ENCODE measurements at regions of chr3 and their contacts with region 1.

Region 1: DNA sequence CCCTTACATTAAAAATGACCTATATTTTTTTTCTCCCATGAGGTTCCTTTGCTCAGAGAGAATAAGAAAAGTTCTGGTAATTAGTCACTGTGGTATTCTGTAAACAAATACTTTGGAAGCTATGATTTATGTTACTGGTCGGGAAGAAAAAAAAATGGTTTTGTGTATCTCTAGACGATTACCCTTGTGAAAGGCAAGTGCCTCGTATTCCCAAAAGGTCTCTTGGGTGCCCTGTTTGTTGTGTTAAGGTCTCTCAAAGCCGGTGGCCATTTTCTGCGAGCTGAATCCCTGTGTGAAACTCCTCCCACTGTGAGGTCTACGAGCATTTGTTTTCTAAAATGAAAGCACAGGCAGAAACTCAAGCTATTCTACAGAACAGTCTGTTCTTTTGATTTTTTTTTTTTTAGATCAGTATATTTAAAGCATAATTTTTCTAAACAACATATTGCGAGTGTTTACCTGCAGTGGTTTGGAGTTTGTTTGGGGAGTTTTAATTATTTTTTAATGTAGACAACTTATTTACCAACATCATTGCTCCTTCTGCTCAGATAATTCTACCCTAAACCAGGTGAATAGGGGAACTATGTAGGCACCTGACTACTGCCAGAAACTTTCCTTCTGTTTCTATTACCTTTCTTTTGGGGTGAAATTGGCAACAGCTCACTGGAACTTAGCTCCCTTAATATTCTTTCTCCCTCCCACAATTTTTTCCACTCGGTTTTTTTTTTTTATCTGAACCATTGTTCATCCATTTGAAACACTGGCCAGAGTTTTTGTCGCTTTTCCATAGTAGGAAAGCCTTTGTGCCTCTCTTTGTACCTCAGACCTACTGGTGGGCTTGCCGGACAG is 44.0 kb downstream of the ZBTB38 start:
- DNase-seq: peak; percentile 49 to 87
- ATAC-seq: peak; percentile 81 to 90 (median 88)
- H3K4me3 ChIP-seq: peak overlapping the region; percentile 23
- H3K4me3 Mint-ChIP-seq: peak overlapping the region; percentile 89
- H3K27ac ChIP-seq: peak overlapping the region; percentile 72
- H3K27ac Mint-ChIP-seq: peak overlapping the region; percentile 96 to 98
- H3K4me1 ChIP-seq: peaks cover 57% of the 10 kb centered on the region
- H3K4me1 Mint-ChIP-seq: peaks cover 56 to 65% of the 10 kb centered on the region in 2 donors
- H3K27me3 ChIP-seq: no peaks in the 10 kb centered on the region
- H3K27me3 Mint-ChIP-seq: no peaks in the 10 kb centered on the region
- CTCF ChIP-seq: no peak

Region 2: GRCh38 chr3:141368062-141368924 is 44.0 kb before region 1 on chr3 and contains the start of gene ZBTB38:
- intact Hi-C with region 1: no loop called
- DNase-seq: peak in 1 of 2 donors; percentile 29
- ATAC-seq: peak in 2 of 3 donors; percentile 35 to 54
- H3K4me3 ChIP-seq: no peak within 1 kb of the TSS
- H3K4me3 Mint-ChIP-seq: peak within 1 kb of the TSS; percentile 47
- H3K27ac ChIP-seq: no peak within 1 kb of the TSS
- H3K27ac Mint-ChIP-seq: peak within 1 kb of the TSS; percentile 50 to 87
- H3K4me1 ChIP-seq: peaks cover 7% of the 10 kb centered on the region
- H3K4me1 Mint-ChIP-seq: peaks cover 9 to 24% of the 10 kb centered on the region in 2 donors
- H3K27me3 ChIP-seq: no peaks in the 10 kb centered on the region
- H3K27me3 Mint-ChIP-seq: no peaks in the 10 kb centered on the region
- CTCF ChIP-seq: no peak
- total RNA-seq, gene ZBTB38: 40.3 to 68.3 (median 56.7) TPM

Region 3: DNA sequence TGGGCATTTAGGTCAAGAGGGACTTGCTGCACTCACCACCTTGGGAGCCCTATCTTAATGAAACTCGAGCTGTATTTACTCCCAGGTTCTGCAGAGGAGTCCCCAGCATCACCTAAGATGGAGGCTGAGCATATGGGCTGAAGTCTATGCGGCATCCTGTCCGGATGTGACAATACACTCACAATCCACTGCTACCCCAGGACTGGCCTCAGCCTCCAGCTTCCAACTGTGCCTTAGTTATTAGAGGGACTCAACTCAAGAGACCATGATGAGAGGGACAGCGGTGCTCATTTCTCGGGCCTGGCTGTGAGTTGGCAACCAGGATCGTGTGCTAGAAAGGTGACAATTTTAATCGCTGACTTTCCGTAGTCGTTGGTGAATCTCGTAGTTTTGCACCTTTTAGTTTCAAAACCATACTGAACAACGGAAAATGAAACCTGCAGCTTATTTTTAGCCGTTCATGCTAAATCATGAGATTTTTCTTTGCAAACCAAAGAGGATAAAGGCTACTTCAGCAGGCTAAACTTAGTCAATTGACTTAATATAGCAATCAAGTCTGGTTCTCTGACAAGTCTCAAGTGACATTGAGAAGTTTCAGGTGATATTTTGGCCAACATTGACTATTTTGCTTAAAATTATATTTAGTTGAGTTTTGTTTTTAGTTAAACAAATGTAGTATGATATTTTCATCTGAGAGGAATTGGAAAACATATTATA is 32.9 kb before region 1 on chr3:
- intact Hi-C with region 1: loop called (anchors 5 kb)
- DNase-seq: peak in 1 of 2 donors; percentile 65
- ATAC-seq: peak; percentile 58 to 75 (median 59)
- H3K4me3 ChIP-seq: no peak overlapping the region
- H3K4me3 Mint-ChIP-seq: peak overlapping the region; percentile 6
- H3K27ac ChIP-seq: peak overlapping the region; percentile 69
- H3K27ac Mint-ChIP-seq: peak overlapping the region; percentile 63 to 78
- H3K4me1 ChIP-seq: peaks cover 8% of the 10 kb centered on the region
- H3K4me1 Mint-ChIP-seq: peaks cover 0 to 22% of the 10 kb centered on the region in 2 donors
- H3K27me3 ChIP-seq: no peaks in the 10 kb centered on the region
- H3K27me3 Mint-ChIP-seq: peaks cover 0 to under 1% of the 10 kb centered on the region in 2 donors
- CTCF ChIP-seq: no peak

Region 4: DNA sequence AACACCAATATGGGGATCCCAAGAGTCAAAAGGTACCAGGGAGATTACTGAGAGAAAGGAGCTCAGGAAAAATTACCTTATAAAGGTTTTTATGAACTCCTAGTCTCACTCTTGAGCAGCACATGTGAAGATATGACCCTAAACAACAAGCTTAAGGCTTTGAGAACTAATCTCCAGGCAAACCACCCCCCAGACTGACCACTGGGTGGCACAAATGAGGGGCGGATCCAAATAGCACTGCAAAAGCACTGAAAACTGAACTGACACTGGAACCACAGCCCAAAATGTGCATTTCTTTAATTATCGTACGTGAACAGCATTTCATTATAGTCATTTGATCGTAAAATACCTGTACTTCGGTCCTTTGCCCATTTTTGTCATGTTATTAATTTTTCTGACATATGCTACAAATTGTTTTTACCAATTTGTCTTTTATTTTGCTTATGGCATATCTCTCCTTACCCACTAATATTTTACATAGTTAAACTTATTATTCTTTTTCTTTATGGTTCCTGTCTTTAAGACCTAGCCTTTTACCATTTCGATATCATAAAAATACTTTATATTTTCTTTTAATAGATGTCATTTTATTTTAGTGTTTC is 768.6 kb after region 1 on chr3:
- intact Hi-C with region 1: no loop called
- DNase-seq: peak; percentile 51 to 53
- ATAC-seq: peak; percentile 83 to 97 (median 97)
- H3K4me3 ChIP-seq: no peak overlapping the region
- H3K4me3 Mint-ChIP-seq: peak overlapping the region; percentile 1
- H3K27ac ChIP-seq: no peak overlapping the region
- H3K27ac Mint-ChIP-seq: peak overlapping the region; percentile 79 to 86
- H3K4me1 ChIP-seq: no peaks in the 10 kb centered on the region
- H3K4me1 Mint-ChIP-seq: peaks cover 15 to 18% of the 10 kb centered on the region in 2 donors
- H3K27me3 ChIP-seq: no peaks in the 10 kb centered on the region
- H3K27me3 Mint-ChIP-seq: no peaks in the 10 kb centered on the region
- CTCF ChIP-seq: peak; percentile 77

Measured in natural killer cell (primary cell).